OCI-LY7 (cell line): ENCODE measurements at regions of chr1 and their contacts with region 1.

Region 1: GRCh38 chr1:32321712-32322291 is 14.2 kb downstream of the MARCKSL1 start:
- DNase-seq: peak; percentile 29
- H3K4me3 ChIP-seq: peak overlapping the region; percentile 30
- H3K27ac ChIP-seq: peak overlapping the region; percentile 74
- H3K4me1 ChIP-seq: peaks cover 76% of the 10 kb centered on the region
- CTCF ChIP-seq: no peak

Region 2: DNA sequence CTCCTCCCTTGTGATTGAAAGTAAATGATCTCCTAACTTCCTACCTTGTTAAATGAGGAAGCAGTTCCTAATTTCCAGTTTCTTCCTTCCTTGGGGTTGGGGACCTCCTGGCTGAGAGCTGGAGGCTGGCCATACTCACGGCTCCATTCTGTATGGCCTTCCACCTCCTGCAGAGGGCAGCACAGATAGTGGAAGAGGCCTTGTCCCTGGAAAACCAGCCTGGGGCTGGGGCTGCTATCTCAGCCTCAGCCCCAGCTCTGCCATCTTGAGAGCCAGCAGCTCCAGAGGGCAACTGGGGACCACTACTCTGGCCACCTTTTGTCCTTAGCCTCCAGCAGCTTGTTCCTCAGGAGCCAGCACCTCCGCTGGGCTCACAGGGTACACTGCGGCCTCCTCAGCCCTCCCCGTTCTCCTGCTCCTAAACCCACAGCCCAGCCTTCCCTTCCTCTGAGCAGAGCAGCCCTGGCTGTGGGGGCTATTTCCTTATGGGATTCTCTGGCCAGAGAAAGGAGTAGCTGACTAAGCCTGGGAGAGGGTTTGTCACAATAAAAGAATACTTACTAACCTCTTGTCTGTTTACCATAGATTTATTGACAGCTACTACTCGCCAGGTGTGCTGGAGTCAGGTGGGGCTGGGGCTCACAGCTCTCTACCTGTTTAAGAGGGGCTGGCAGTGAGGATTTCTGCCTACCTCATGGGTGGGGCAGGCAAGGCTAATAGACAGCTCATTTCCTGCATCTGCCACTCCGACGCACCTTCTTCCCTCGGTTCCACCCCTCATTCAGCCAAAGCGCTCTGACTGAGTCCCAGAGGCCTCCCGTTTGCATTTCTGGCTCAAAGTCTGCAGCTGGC is 105.9 kb before region 1 on chr1:
- CTCF ChIA-PET with region 1: interaction called, 10 read pairs
- POLR2A ChIA-PET with region 1: interaction called, 10 read pairs
- intact Hi-C with region 1: no loop called
- DNase-seq: peak; percentile 81
- H3K4me3 ChIP-seq: no peak overlapping the region
- H3K27ac ChIP-seq: no peak overlapping the region
- H3K4me1 ChIP-seq: peaks cover 11% of the 10 kb centered on the region
- CTCF ChIP-seq: peak; percentile 95

Region 3: GRCh38 chr1:32221980-32222755 is 99.6 kb before region 1 on chr1 and contains the starts of genes EIF3I and TMEM234:
- CTCF ChIA-PET with region 1: no interaction called
- POLR2A ChIA-PET with region 1: interaction called, 8 read pairs
- intact Hi-C with region 1: loop called (anchors 2 kb)
- DNase-seq: peak; percentile 93
- H3K4me3 ChIP-seq: peak within 1 kb of the TSS; percentile 96
- H3K27ac ChIP-seq: peak within 1 kb of the TSS; percentile 41
- H3K4me1 ChIP-seq: peaks cover 33% of the 10 kb centered on the region
- CTCF ChIP-seq: no peak
- total RNA-seq, gene EIF3I: 144 and 182 TPM in 2 replicates
- total RNA-seq, gene TMEM234: 14.9 and 17.1 TPM in 2 replicates

Region 4: GRCh38 chr1:32307323-32307722 is 14.5 kb before region 1 on chr1:
- CTCF ChIA-PET with region 1: no interaction called
- POLR2A ChIA-PET with region 1: interaction called, 13 read pairs
- intact Hi-C with region 1: no loop called
- DNase-seq: no peak
- H3K4me3 ChIP-seq: no peak overlapping the region
- H3K27ac ChIP-seq: peak overlapping the region; percentile 2
- H3K4me1 ChIP-seq: peaks cover 54% of the 10 kb centered on the region
- CTCF ChIP-seq: no peak

Region 5: GRCh38 chr1:32438136-32438535 is 116.3 kb after region 1 on chr1:
- CTCF ChIA-PET with region 1: no interaction called
- POLR2A ChIA-PET with region 1: no interaction called
- intact Hi-C with region 1: no loop called
- DNase-seq: no peak
- H3K4me3 ChIP-seq: no peak overlapping the region
- H3K27ac ChIP-seq: no peak overlapping the region
- H3K4me1 ChIP-seq: no peaks in the 10 kb centered on the region
- CTCF ChIP-seq: no peak